ENCODE measurements at regions of chr1 and their contacts with region 1.

Region 1: DNA sequence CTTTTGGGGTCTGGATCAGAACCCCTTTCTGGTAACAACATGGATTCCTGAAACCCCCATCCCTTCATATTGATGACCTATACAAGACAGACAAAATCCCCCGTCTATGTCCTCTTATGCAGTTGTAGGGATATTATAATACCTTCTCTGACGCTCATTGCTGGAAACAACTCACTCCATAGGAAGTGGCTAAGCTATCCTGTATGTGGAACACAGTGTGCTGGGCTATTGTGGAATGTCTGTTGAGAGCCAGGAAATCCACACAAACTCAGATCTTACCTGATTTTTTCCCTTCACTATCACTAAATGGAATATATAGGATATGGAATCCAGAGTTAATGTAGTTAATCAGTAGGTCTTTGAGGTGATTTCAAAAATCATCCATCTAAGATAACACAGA is 17.7 kb upstream of the PIK3R3 start:
- DNase-seq: no peak
- ATAC-seq: no peak

Region 2: DNA sequence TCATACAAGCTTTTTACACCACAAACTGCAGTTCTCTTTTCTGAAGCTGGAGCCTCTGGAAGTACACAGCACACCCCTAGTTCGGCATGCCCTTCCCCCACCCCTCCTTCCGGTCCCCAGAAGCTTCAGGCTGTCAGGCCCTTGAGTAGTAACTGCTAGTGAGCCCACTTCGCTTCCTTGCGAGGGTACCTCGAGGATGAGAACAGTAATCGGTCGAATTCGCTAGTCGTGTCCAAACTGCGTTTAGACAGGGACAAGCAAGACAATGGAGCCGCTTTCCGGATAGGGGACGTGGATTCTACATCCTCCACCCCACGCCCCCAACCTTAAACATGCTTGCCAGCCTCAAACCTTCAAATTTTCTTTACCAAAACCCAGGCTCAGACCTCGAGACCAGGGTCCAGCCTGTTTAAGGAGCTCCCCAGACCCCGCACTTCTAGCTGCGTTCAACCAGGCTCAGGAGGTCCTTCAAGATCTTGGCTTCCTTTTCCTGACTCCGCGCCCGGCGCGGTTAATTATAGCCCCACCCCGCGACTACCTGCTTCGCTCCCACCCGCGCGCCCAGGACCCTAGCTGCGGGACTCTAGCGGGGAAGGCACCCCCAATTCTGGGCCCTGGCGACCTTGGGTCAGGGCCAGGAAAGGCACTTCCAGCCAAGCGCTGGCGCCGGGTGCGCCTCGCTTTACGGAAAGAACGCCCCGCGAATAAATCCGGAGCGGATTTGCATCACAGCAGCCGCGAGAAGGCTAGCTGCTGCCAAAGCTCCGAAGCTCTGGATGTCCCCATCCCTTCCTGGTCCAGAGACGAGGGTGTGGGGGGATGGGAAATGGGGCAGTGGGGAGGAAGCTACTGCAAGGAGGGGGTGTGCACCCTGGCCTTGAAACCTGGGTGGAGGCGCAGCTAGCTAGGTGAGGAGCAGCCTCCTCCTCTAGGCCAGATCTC is 16.7 kb after region 1 on chr1:
- intact Hi-C with region 1: loop called (anchors 1 kb)
- DNase-seq: peak; percentile 78
- ATAC-seq: peak; percentile 45